Activated T-helper 1 cell treated with anti-CD3 and anti-CD28 coated beads, Interleukin-12 subunit alpha, Interleukin-12 subunit beta, Interleukin-2, Interleukin-4 antibody, amounts not matched to agents 30 ng/mL and 10 ng/mL and 1 ng/mL, durations not matched to agents 14 hours and 24 hours and 36 hours (primary cell): ENCODE measurements at regions of chr10 and their contacts with region 1.

Region 1: DNA sequence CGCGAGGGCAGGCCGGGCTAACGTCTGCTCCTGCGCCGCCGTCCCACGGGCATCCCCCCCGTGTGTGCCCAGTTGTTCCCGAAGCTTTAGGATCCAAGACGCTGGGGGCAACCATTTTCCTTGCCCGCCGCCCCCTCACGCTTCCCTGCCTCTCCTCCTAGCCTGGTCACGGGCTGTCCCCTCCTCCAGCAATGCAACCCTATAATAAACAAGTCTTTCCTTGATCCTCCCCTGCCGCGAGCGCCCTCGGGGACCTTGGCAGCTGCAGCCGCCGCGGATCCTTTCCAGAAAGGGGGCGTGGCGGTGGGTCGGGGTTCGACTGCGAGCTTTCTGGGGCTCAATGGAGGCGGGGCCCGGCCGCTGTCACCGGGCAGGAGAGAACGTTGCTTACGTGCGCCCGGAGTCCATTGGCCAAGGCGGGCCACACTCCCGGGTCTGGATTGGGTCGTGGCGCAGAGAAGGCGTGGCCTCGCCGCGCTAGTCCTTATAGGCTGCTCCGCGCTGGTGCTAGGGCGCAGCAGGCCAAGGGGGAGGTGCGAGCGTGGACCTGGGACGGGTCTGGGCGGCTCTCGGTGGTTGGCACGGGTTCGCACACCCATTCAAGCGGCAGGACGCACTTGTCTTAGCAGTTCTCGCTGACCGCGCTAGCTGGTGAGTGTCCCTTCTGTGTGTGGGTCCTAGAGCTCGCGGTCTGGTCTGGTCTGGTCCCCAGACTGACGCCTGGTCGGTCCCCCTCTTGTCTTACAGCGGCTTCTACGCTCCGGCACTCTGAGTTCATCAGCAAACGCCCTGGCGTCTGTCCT is at the start of gene DDIT4:
- DNase-seq: peak; percentile 99
- H3K4me3 Mint-ChIP-seq: peak within 1 kb of the TSS; percentile 97
- H3K27ac Mint-ChIP-seq: peak within 1 kb of the TSS; percentile 97
- H3K4me1 Mint-ChIP-seq: peaks cover 56% of the 10 kb centered on the region
- H3K27me3 Mint-ChIP-seq: no peaks in the 10 kb centered on the region
- total RNA-seq, gene DDIT4: 178 and 183 TPM in 2 replicates

Region 2: DNA sequence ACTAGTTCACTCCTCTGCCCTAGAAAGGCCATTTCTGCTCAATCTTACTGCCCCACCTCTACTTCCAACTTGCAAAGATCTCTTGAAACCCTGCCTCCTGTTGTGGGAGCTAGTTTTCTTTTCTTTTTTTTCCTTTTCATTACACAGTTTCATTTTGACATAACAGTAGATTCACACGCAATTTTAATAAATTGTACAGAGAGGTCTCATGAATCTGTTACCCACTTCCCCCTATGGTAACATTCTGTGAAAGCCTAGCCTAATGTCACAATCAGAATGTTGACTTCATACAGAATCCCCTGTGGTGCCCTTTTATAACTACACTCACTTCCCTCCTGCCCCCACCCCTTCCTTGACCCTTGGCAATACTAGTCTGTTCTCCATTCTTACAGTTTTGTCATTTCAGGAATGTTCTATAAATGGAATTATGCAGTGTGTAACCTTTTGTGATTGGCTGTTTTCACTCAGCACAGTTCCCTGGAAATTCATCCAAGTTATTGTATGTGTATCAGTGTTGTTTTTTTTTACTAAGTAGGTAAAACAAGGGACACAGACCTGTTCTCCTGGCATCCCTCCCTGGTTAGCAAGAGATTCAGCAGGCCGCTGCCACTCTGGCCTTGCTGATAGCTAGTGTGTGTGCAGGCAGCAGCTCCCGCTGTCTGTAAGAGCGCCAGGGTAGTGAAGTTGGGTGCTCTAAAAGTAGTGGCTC is 287.9 kb before region 1 on chr10:
- intact Hi-C with region 1: no loop called
- DNase-seq: no peak
- H3K4me3 Mint-ChIP-seq: no peak overlapping the region
- H3K27ac Mint-ChIP-seq: peak overlapping the region; percentile 11
- H3K4me1 Mint-ChIP-seq: peaks cover 6% of the 10 kb centered on the region
- H3K27me3 Mint-ChIP-seq: peaks cover 2% of the 10 kb centered on the region

Region 3: GRCh38 chr10:72088889-72089575 is 184.6 kb before region 1 on chr10:
- intact Hi-C with region 1: loop called (anchors 5 kb)
- DNase-seq: peak; percentile 47
- H3K4me3 Mint-ChIP-seq: peak overlapping the region; percentile 99
- H3K27ac Mint-ChIP-seq: peak overlapping the region; percentile 99
- H3K4me1 Mint-ChIP-seq: peaks cover 62% of the 10 kb centered on the region
- H3K27me3 Mint-ChIP-seq: no peaks in the 10 kb centered on the region

Region 4: GRCh38 chr10:72215652-72216549 is 57.7 kb before region 1 on chr10 and contains the starts of genes ANAPC16 and ASCC1:
- intact Hi-C with region 1: loop called (anchors 1 kb)
- DNase-seq: peak; percentile 94
- H3K4me3 Mint-ChIP-seq: peak within 1 kb of the TSS; percentile 98
- H3K27ac Mint-ChIP-seq: peak within 1 kb of the TSS; percentile 99
- H3K4me1 Mint-ChIP-seq: peaks cover 51% of the 10 kb centered on the region
- H3K27me3 Mint-ChIP-seq: peaks cover 2% of the 10 kb centered on the region
- total RNA-seq, gene ANAPC16: 80.0 and 81.6 TPM in 2 replicates
- total RNA-seq, gene ASCC1: 29.8 and 33.5 TPM in 2 replicates

Region 5: DNA sequence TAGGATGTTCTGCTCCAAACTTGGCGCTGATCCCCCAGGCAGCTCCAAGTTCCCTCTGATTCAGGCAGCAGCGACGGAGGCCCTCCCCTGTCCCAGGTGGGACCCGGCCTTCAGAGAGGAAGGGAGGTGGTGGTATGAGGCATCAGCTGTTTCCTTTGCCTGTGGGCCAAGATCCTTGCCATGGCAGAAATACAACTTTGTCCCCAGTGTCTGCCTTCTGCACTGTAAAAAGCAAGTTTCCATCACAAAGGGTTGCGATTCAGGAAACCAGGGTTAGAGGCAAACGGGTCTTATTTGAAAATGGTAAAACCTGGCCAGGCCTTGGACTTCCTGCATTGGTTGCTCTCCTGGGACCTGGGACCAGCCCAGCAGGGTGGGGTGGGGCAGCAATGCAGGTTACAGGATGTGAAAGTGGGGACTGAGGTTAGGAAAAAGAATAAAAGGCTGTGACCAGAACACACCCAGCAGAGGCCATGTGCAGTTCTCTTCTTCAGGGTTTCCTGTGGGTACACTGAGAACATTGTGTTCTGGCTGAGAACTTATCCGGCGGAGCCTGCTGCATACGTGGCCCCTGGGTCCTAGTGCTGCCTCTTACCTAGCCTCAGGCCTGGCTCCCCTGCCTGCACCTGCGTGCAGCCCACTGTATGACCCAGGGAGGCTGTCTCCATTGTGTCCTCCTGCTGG is 25.0 kb before region 1 on chr10:
- intact Hi-C with region 1: loop called (anchors 1 kb)
- DNase-seq: peak; percentile 75
- H3K4me3 Mint-ChIP-seq: peak overlapping the region; percentile 76
- H3K27ac Mint-ChIP-seq: peak overlapping the region; percentile 98
- H3K4me1 Mint-ChIP-seq: peaks cover 83% of the 10 kb centered on the region
- H3K27me3 Mint-ChIP-seq: no peaks in the 10 kb centered on the region

Region 6: GRCh38 chr10:72292223-72292691 is 18.6 kb after region 1 on chr10:
- intact Hi-C with region 1: loop called (anchors 1 kb)
- DNase-seq: no peak
- H3K4me3 Mint-ChIP-seq: peak overlapping the region; percentile 45
- H3K27ac Mint-ChIP-seq: peak overlapping the region; percentile 100
- H3K4me1 Mint-ChIP-seq: peaks cover 59% of the 10 kb centered on the region
- H3K27me3 Mint-ChIP-seq: no peaks in the 10 kb centered on the region

Region 7: GRCh38 chr10:72308320-72308987 is 34.8 kb after region 1 on chr10:
- intact Hi-C with region 1: no loop called
- DNase-seq: no peak
- H3K4me3 Mint-ChIP-seq: peak overlapping the region; percentile 31
- H3K27ac Mint-ChIP-seq: peak overlapping the region; percentile 85
- H3K4me1 Mint-ChIP-seq: peaks cover 59% of the 10 kb centered on the region
- H3K27me3 Mint-ChIP-seq: no peaks in the 10 kb centered on the region

Region 8: GRCh38 chr10:72319416-72320254 is 46.0 kb after region 1 on chr10:
- intact Hi-C with region 1: loop called (anchors 1 kb)
- DNase-seq: peak; percentile 84
- H3K4me3 Mint-ChIP-seq: peak overlapping the region; percentile 80
- H3K27ac Mint-ChIP-seq: peak overlapping the region; percentile 98
- H3K4me1 Mint-ChIP-seq: peaks cover 70% of the 10 kb centered on the region
- H3K27me3 Mint-ChIP-seq: no peaks in the 10 kb centered on the region